ENCODE measurements at regions of chr13 and their contacts with region 1.

Region 1: GRCh38 chr13:26872525-26873385 is 112.2 kb upstream of the GPR12 start:
- DNase-seq: peak; percentile 74
- H3K4me3 Mint-ChIP-seq: no peak overlapping the region
- H3K27ac Mint-ChIP-seq: no peak overlapping the region
- H3K4me1 Mint-ChIP-seq: no peaks in the 10 kb centered on the region
- H3K27me3 Mint-ChIP-seq: peaks cover 8% of the 10 kb centered on the region

Region 2: DNA sequence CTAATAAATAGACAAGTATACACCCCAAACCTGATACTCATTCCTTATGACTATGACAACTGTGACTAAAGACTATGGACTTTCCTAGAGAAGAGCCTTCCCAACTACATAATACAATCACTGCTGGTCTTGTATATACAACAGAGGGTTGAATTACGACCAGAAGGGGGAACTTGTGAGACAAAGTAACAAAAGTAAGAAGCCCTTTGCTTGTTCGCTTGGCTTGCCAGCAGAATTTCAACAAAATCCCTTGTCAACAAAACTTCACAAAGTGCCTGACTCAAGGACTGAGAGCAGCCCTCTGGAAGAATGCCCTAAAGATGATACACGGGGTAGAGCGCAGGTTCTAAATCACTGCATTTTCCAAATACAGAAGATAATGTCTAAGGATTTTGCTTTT is 215.8 kb before region 1 on chr13:
- CTCF ChIA-PET with region 1: no interaction called
- DNase-seq: no peak
- H3K4me3 Mint-ChIP-seq: no peak overlapping the region
- H3K27ac Mint-ChIP-seq: no peak overlapping the region
- H3K4me1 Mint-ChIP-seq: no peaks in the 10 kb centered on the region
- H3K27me3 Mint-ChIP-seq: peaks cover 3% of the 10 kb centered on the region

Region 3: GRCh38 chr13:26707122-26708006 is 165.4 kb before region 1 on chr13:
- CTCF ChIA-PET with region 1: interaction called, 56 read pairs
- DNase-seq: peak; percentile 59
- H3K4me3 Mint-ChIP-seq: no peak overlapping the region
- H3K27ac Mint-ChIP-seq: no peak overlapping the region
- H3K4me1 Mint-ChIP-seq: no peaks in the 10 kb centered on the region
- H3K27me3 Mint-ChIP-seq: peaks cover 4% of the 10 kb centered on the region

Region 4: GRCh38 chr13:27034678-27035111 is 161.9 kb after region 1 on chr13:
- CTCF ChIA-PET with region 1: no interaction called
- DNase-seq: no peak
- H3K4me3 Mint-ChIP-seq: no peak overlapping the region
- H3K27ac Mint-ChIP-seq: no peak overlapping the region
- H3K4me1 Mint-ChIP-seq: peaks cover 8% of the 10 kb centered on the region
- H3K27me3 Mint-ChIP-seq: peaks cover 43% of the 10 kb centered on the region